ENCODE measurements at regions of chr18 and their contacts with region 1.

Region 1: DNA sequence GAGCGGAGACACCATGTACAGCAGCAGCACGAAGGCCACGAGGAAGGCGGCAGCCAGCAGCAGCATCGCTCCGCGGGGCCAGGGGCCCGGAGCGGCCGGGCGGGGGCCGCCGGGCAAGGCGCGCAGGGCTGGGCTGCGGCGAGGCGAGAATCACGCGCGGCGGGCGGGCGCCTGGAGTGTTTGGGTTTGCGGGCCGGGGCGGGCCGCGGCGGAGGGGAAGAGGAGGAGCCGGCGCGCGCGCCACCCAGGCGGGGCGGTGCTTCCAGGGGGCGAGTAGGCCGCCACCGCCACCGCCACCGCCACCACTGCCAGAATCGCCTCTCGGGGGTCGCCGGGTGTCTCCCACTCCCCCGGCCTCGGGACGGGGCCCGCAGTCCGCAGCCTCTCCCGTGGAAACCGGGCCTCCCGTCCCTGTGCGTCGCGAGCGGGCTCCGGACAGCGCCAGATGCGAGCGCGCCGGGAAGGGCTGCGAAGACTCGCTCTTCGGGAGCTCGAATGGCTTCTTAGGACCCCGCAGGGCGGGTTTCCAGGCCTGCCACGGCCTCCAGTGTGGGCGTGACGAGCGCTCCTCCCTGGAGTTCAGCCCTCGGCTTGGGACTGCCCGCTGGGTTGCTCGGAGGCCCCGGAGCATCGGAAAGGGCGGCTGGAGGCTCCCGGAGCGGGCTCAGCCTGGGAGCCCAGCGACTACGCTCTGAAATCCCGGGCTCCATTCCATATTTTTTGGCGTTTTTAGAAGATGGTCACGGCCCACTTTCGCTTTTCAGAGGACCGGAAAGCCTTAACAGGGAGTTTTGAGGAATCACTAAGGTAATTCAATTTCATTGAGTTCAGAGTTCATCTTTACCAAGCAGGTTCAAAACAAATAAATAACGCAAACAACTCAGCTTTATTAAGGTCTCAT is at the start of gene KDSR:
- DNase-seq: peak; percentile 96
- H3K4me3 ChIP-seq: peak within 1 kb of the TSS; percentile 75 to 98 (median 92)
- H3K27ac ChIP-seq: peak within 1 kb of the TSS; percentile 80 to 98 (median 94)
- H3K4me1 ChIP-seq: peaks cover 0 to 43% (median 35%) of the 10 kb centered on the region in 6 donors
- H3K27me3 ChIP-seq: no peaks in the 10 kb centered on the region
- CTCF ChIP-seq: peak in 1 of 11 experiments; percentile 8
- POLR2A ChIP-seq: peak in 2 of 3 donors; percentile 53 to 67
- total RNA-seq, gene KDSR: 31.1 to 42.2 (median 33.3) TPM

Region 2: GRCh38 chr18:63422087-63422809 is 54.9 kb after region 1 on chr18 and contains the start of gene VPS4B:
- intact Hi-C with region 1: loop called (anchors 10 kb)
- DNase-seq: peak; percentile 100
- H3K4me3 ChIP-seq: peak within 1 kb of the TSS; percentile 64 to 90 (median 82)
- H3K27ac ChIP-seq: peak within 1 kb of the TSS; percentile 90 to 97 (median 95)
- H3K4me1 ChIP-seq: peaks cover 8 to 56% (median 48%) of the 10 kb centered on the region in 6 donors
- H3K27me3 ChIP-seq: no peaks in the 10 kb centered on the region
- CTCF ChIP-seq: peak in 3 of 11 experiments; percentile 13 to 26 (median 25)
- POLR2A ChIP-seq: peak; percentile 58 to 81 (median 62)
- total RNA-seq, gene VPS4B: 39.8 to 69.4 (median 63.9) TPM

Measured in spleen (tissue), 13 donors.